ENCODE measurements at regions of chr17 and their contacts with region 1.

Region 1: DNA sequence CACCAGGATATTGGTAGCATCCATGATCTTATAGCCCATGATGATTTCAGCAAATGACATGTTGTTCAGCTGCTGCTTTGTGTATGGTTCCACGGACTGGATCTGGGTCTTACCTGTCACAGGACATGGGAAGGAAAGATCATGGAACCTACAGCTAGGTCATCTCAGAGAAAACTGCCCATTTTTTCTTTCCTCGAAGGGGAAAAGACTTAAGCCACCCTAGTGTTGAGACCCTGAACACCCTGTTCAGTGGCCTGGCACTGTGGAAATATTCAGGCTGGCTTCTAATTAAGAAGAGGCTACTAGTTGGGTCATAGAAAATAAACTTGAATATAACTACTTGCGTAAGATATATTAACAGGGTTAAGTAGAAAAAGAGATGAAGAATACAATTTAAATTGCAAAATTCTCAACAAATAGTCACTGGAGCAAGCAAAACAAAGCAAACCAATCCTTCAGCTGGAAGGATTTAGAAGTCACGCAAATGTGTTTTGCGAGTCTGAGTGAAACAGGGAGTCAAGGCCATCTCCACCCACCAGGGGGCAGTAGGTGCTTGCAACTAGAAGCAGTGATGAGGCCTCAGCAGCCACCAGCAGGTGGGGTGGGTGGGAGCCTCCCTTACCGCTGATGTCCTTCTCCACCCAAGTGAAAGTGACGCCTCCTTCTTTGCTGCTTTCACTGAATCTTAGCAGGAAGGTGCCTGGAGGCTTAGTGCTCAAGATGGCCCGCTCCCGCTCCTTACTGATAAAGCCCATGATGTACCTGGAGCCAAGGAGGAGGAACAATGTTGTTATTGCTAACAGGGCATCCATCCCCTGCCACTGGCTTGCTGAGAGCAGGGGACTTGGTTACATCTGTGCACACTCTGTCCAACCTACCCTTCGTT is 34.3 kb downstream of the STAT5A start:
- DNase-seq: peak; percentile 87
- H3K4me3 Mint-ChIP-seq: no peak overlapping the region
- H3K27ac Mint-ChIP-seq: peak overlapping the region; percentile 1
- H3K4me1 Mint-ChIP-seq: peaks cover 55% of the 10 kb centered on the region
- H3K27me3 Mint-ChIP-seq: no peaks in the 10 kb centered on the region

Region 2: DNA sequence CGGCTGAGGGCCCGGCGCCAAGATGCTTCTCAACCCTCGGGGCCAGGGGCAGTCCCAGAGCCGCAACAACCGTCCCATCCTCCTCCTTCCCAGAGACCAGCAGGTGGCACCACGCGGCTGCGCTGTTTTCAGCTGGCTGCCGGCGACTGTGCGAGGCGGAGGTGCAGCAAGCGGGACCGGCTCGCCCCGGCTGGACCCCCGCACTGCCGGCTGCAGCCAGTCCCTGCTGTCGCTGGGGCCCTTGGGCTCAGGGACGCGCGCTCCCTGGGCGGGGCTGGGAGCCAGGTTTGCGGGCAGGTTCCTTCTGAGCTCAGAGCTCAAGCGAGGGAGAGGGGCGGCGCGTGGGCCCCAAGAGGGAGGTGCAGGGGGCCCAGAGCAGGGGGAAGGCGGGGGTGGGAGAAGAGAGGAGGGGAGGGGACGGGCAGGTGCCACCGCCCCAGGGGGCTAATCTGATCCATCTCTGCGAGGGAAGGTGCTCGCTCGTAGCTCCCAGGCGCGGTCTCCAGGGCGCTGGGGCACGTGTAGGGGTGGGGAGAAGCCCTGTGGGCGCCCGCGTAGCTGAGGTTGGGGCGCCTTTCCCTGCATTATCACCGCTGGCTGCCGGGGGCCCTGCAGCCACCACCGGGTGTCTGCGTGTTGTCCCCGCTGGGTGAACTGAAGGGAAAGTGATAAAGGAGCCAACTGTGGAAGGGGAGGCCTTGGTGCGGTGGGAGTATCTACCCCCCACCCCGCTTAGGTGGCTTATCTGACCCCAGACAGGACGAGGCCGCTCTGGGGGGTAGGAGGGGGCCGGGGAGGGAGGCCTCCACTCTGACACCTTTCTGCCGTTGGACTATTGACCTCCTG is 10.1 kb before region 1 on chr17:
- intact Hi-C with region 1: loop called (anchors 1 kb)
- DNase-seq: peak; percentile 68
- H3K4me3 Mint-ChIP-seq: peak overlapping the region; percentile 81
- H3K27ac Mint-ChIP-seq: peak overlapping the region; percentile 86
- H3K4me1 Mint-ChIP-seq: peaks cover 86% of the 10 kb centered on the region
- H3K27me3 Mint-ChIP-seq: no peaks in the 10 kb centered on the region

Region 3: DNA sequence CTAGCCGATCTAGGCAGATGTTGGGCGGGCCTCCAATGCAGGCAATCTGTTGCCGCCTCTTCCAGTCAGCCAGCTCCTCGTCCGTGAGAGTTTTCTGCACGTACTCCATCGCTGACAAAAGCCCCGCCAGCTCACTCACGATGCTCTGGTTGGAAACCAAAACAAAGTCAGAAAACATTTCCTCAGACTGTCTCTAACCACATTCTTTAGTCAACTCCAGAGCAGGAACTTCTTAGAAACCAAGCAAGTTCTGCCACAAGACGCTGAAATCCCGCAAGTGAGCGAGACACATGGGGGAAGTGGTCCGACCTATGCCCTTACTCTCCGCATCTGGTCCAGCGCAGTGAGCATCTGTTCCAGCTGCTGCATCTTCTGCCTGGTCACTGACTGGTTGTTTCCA is 14.8 kb after region 1 on chr17:
- intact Hi-C with region 1: loop called (anchors 1 kb)
- DNase-seq: peak; percentile 82
- H3K4me3 Mint-ChIP-seq: peak overlapping the region; percentile 79
- H3K27ac Mint-ChIP-seq: peak overlapping the region; percentile 97
- H3K4me1 Mint-ChIP-seq: peaks cover 76% of the 10 kb centered on the region
- H3K27me3 Mint-ChIP-seq: no peaks in the 10 kb centered on the region

Region 4: DNA sequence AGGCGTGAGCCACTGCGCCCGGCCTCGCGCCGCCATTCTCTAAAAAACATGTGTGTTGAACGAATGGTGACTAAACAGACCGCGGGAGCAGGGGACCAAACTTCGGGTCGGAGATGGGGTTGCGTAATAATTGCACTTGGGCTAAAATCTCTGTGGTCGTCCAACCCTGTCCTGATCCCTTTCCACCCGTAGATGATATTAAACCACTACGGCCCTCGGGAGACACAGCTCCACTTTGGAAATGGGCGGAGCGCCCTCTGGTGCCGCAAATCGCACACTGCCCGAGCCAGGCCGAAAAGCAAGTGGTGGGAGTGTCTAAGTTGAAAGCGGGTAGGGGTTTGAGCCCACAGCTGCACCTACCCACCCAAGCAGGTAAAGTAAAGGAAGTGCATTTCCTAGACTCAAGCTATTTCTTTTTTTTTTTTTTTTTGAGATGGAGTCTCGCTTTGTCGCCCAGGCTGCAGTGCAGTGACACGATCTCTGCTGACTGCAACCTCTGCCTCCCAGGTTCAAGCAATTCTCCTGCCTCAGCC is 83.4 kb after region 1 on chr17:
- intact Hi-C with region 1: loop called (anchors 1 kb)
- DNase-seq: peak; percentile 73
- H3K4me3 Mint-ChIP-seq: no peak overlapping the region
- H3K27ac Mint-ChIP-seq: no peak overlapping the region
- H3K4me1 Mint-ChIP-seq: peaks cover 28% of the 10 kb centered on the region
- H3K27me3 Mint-ChIP-seq: peaks cover 8% of the 10 kb centered on the region

Region 5: GRCh38 chr17:42517516-42517915 is 194.9 kb after region 1 on chr17:
- intact Hi-C with region 1: loop called (anchors 2 kb)
- DNase-seq: peak; percentile 70
- H3K4me3 Mint-ChIP-seq: no peak overlapping the region
- H3K27ac Mint-ChIP-seq: no peak overlapping the region
- H3K4me1 Mint-ChIP-seq: no peaks in the 10 kb centered on the region
- H3K27me3 Mint-ChIP-seq: peaks cover 4% of the 10 kb centered on the region

Region 6: GRCh38 chr17:42527273-42527703 is 204.7 kb after region 1 on chr17:
- intact Hi-C with region 1: loop called (anchors 1 kb)
- DNase-seq: peak; percentile 51
- H3K4me3 Mint-ChIP-seq: no peak overlapping the region
- H3K27ac Mint-ChIP-seq: no peak overlapping the region
- H3K4me1 Mint-ChIP-seq: peaks cover 24% of the 10 kb centered on the region
- H3K27me3 Mint-ChIP-seq: peaks cover 9% of the 10 kb centered on the region

Measured in activated T-helper 1 cell treated with anti-CD3 and anti-CD28 coated beads, Interleukin-12 subunit alpha, Interleukin-12 subunit beta, Interleukin-2, Interleukin-4 antibody, amounts not matched to agents 30 ng/mL and 10 ng/mL and 1 ng/mL, durations not matched to agents 14 hours and 24 hours and 36 hours (primary cell).